GM10248 (cell line): ENCODE measurements at regions of chr19 and their contacts with region 1.

Region 1: DNA sequence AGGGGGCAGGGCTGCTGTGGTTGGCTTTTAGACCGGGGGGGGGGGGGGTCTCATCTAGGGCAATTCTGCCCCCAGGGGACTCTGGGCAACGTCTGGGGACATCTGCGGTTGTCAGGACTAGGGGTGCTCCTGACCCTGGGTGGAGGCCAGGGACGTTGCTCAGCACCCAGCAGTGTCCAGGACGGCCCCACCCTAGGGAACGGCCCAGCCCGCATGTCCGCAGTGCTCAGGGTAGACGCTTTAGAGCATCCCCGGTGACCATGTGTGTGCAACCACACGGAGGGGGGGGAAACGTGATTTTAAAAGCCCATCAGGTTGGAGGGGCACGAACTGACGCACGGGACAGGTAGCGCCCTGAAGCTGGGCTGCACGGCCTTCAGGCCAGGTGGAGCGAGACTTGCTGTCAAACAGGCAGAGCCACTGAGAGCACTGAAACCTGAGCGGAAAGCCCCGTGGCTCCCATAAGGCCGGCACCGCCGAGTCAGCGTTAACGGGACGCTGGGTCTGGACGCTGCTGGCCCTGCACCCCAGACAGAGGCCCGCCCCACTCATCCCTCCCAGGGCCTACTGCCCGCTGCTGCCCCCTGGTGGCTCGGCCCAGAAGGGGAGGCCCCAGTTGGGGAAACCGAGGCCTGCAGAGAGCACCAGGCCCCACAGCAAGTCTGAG is 8.3 kb downstream of the CACTIN start:
- DNase-seq: peak; percentile 87
- CTCF ChIP-seq: peak; percentile 92

Region 2: DNA sequence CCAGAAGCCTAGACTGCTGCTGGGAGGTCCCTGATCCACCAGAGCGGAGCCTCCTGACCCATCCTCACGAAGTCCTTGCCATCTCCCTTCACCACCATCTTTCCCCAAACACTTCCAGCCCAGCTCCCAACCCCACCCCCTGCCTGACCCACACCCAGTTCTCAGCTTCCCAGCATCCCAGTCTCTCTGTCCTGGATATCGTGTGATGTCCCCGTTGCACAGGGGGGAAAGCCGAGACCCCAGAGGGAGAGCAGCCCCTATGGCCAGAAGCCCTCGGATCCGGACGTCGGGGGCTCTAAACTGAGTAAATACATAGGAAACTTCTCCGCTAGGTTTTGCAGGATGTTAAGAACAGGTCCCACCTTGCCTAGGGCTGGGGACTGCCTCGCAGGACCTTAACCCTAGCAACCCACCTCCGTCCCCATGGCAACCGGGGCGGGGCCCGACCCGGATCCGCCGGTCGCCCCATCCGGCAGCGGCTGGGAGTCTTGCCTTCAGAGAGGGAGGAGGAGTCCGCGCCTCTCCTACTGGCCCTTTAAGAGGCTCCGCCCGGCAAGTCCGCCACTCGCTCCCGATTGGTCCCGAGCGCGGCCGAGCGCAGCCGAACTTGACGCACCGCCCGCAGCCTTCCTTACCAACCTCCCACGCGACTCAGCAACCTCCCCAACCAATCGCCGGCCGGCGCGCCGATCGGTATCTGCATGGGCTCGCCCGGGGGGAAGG is 46.0 kb before region 1 on chr19:
- CTCF ChIA-PET with region 1: no interaction called
- POLR2A ChIA-PET with region 1: no interaction called
- DNase-seq: peak; percentile 98
- CTCF ChIP-seq: no peak

Region 3: GRCh38 chr19:3591876-3592613 is 26.2 kb before region 1 on chr19:
- CTCF ChIA-PET with region 1: interaction called, 15 read pairs
- POLR2A ChIA-PET with region 1: no interaction called
- DNase-seq: no peak
- CTCF ChIP-seq: no peak

Region 4: GRCh38 chr19:3607303-3608078 is 10.8 kb before region 1 on chr19:
- CTCF ChIA-PET with region 1: interaction called, 13 read pairs
- POLR2A ChIA-PET with region 1: interaction called, 3 read pairs
- DNase-seq: no peak
- CTCF ChIP-seq: no peak